Endothelial cell of umbilical vein (primary cell): ENCODE measurements at regions of chr17 and their contacts with region 1.

Region 1: GRCh38 chr17:69448431-69449102 is 34.1 kb downstream of the MAP2K6 start:
- DNase-seq: peak; percentile 54
- H3K4me3 ChIP-seq: no peak overlapping the region
- H3K27ac ChIP-seq: no peak overlapping the region
- H3K4me1 ChIP-seq: peaks cover 38% of the 10 kb centered on the region
- H3K27me3 ChIP-seq: no peaks in the 10 kb centered on the region
- CTCF ChIP-seq: no peak
- POLR2A ChIP-seq: no peak

Region 2: DNA sequence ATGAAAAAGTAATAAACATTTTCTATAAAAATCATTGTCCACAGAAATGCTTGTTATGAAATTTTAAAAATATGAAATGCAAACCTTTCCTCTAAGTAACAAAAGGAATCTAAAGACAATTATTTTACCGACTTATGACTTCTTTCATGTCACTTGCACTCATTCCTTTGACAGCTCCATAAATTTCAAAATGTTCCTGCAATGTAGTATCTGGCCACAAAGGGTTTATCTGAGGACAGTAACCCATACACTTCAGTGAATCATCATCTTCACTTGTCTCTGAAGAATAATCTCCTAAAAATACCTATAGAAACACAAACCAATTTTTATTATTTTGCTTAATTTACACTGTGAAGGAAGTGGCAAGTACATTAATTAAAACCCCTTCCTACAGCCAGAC is 194.4 kb before region 1 on chr17:
- CTCF ChIA-PET with region 1: no interaction called
- POLR2A ChIA-PET with region 1: no interaction called
- dilution Hi-C with region 1: no loop called
- intact Hi-C with region 1: no loop called
- DNase-seq: no peak
- H3K4me3 ChIP-seq: no peak overlapping the region
- H3K27ac ChIP-seq: no peak overlapping the region
- H3K4me1 ChIP-seq: no peaks in the 10 kb centered on the region
- H3K27me3 ChIP-seq: no peaks in the 10 kb centered on the region
- CTCF ChIP-seq: no peak
- POLR2A ChIP-seq: no peak

Region 3: DNA sequence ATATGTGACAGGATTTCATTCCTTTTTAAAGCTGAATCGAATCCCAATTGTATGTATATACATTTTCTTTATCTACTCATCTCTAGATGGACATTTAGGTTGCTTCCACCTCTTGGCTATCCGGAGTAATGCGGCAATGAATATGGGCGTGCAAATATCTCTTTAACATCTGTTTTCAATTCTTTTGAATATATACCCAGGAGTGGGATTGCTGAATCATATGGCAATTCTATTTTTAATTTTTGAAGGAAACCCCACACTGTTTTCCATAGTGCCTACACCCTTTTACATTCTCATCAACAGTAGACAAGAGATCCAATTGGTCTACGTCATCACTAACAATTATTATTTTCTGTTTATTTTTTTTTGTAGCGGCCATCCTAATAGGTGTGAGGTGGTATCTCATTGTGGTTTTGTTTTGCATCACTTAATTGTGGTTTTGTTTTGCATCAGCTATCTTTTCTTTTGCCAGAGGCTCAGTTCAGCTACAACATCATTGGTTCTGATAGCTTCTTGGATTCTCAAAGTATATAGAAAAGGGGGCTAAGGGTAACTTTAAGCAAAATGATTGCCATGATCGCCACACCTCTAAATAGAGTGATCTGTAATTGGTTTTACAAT is 59.6 kb before region 1 on chr17:
- CTCF ChIA-PET with region 1: interaction called, 11 read pairs
- POLR2A ChIA-PET with region 1: no interaction called
- dilution Hi-C with region 1: no loop called
- intact Hi-C with region 1: no loop called
- DNase-seq: no peak
- H3K4me3 ChIP-seq: no peak overlapping the region
- H3K27ac ChIP-seq: no peak overlapping the region
- H3K4me1 ChIP-seq: no peaks in the 10 kb centered on the region
- H3K27me3 ChIP-seq: no peaks in the 10 kb centered on the region
- CTCF ChIP-seq: no peak
- POLR2A ChIP-seq: no peak

Region 4: GRCh38 chr17:69414408-69415274 is 33.9 kb before region 1 on chr17 and contains the start of gene MAP2K6:
- CTCF ChIA-PET with region 1: interaction called, 7 read pairs
- POLR2A ChIA-PET with region 1: no interaction called
- dilution Hi-C with region 1: no loop called
- intact Hi-C with region 1: loop called (anchors 2 kb)
- DNase-seq: peak; percentile 86
- H3K4me3 ChIP-seq: peak within 1 kb of the TSS; percentile 42 to 70 (median 48)
- H3K27ac ChIP-seq: peak within 1 kb of the TSS; percentile 35
- H3K4me1 ChIP-seq: peaks cover 48% of the 10 kb centered on the region
- H3K27me3 ChIP-seq: no peaks in the 10 kb centered on the region
- CTCF ChIP-seq: no peak
- POLR2A ChIP-seq: peak; percentile 50
- total RNA-seq, gene MAP2K6: 11.4 and 13.9 TPM in 2 replicates

Region 5: DNA sequence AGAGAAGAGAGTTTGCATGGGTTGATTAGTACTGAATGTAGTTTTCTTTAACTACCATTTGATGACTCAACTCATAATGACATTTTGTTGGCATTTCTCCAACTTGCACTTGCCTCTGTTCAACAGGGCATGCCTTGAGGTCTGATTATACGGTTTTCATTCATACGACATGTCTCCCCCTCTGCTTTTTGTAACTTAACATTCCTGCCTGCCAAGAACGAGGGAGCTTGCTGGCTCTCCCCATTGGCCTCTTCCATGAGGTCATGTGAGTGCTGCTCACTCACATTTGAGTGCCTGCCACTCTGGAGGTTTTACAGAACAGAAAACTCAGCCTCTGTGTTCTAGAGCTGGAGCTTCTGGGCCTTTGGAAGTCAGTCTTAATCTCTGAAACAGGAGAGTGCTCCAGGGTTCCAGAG is 14.4 kb before region 1 on chr17:
- CTCF ChIA-PET with region 1: interaction called, 18 read pairs
- POLR2A ChIA-PET with region 1: interaction called, 4 read pairs
- dilution Hi-C with region 1: no loop called
- intact Hi-C with region 1: loop called (anchors 2 kb)
- DNase-seq: peak; percentile 83
- H3K4me3 ChIP-seq: no peak overlapping the region
- H3K27ac ChIP-seq: no peak overlapping the region
- H3K4me1 ChIP-seq: peaks cover 27% of the 10 kb centered on the region
- H3K27me3 ChIP-seq: no peaks in the 10 kb centered on the region
- CTCF ChIP-seq: no peak
- POLR2A ChIP-seq: no peak

Region 6: DNA sequence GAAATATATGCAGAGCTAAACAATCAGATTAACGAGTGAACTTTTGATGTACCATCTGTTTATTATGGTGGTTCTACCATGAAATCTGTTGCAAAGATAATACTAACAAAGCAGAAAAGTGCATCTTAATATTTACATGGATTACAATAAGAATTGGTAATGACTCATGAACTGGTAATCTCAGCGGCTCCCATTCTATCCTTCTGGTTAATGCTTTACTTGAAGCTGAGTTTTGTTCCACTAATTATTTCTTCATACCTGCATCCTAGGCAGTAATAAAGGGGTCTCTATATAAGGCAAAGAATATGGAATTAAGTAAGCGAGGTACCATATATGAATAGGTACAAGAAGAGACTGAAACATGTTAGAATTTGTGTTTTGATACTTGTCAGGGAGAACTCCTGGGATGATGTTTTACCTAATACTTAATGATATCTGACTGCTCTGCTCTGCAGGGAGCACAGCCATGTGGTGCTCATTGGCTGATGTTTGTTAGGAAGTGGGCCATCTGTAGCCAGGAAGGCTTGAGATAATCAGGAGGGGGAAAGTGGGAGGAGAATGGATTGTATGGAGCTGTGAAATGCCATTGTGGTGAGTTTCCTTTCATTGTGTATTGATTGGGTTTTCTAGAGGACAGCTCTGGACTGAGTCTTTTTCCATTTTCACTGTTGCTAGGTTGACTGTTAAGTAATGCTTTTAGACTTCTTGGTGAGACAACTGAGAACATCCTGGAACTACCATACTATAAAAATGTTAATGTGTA is 18.5 kb after region 1 on chr17:
- CTCF ChIA-PET with region 1: interaction called, 5 read pairs
- POLR2A ChIA-PET with region 1: no interaction called
- dilution Hi-C with region 1: no loop called
- intact Hi-C with region 1: loop called (anchors 1 kb)
- DNase-seq: peak; percentile 92
- H3K4me3 ChIP-seq: no peak overlapping the region
- H3K27ac ChIP-seq: peak overlapping the region; percentile 65
- H3K4me1 ChIP-seq: peaks cover 20% of the 10 kb centered on the region
- H3K27me3 ChIP-seq: no peaks in the 10 kb centered on the region
- CTCF ChIP-seq: no peak
- POLR2A ChIP-seq: no peak

Region 7: GRCh38 chr17:69516911-69517310 is 68.3 kb after region 1 on chr17:
- CTCF ChIA-PET with region 1: interaction called, 10 read pairs
- POLR2A ChIA-PET with region 1: no interaction called
- dilution Hi-C with region 1: no loop called
- intact Hi-C with region 1: loop called (anchors 5 kb)
- DNase-seq: no peak
- H3K4me3 ChIP-seq: no peak overlapping the region
- H3K27ac ChIP-seq: no peak overlapping the region
- H3K4me1 ChIP-seq: peaks cover 14% of the 10 kb centered on the region
- H3K27me3 ChIP-seq: no peaks in the 10 kb centered on the region
- CTCF ChIP-seq: no peak
- POLR2A ChIP-seq: no peak